ENCODE measurements at regions of chr1 and their contacts with region 1.

Region 1: DNA sequence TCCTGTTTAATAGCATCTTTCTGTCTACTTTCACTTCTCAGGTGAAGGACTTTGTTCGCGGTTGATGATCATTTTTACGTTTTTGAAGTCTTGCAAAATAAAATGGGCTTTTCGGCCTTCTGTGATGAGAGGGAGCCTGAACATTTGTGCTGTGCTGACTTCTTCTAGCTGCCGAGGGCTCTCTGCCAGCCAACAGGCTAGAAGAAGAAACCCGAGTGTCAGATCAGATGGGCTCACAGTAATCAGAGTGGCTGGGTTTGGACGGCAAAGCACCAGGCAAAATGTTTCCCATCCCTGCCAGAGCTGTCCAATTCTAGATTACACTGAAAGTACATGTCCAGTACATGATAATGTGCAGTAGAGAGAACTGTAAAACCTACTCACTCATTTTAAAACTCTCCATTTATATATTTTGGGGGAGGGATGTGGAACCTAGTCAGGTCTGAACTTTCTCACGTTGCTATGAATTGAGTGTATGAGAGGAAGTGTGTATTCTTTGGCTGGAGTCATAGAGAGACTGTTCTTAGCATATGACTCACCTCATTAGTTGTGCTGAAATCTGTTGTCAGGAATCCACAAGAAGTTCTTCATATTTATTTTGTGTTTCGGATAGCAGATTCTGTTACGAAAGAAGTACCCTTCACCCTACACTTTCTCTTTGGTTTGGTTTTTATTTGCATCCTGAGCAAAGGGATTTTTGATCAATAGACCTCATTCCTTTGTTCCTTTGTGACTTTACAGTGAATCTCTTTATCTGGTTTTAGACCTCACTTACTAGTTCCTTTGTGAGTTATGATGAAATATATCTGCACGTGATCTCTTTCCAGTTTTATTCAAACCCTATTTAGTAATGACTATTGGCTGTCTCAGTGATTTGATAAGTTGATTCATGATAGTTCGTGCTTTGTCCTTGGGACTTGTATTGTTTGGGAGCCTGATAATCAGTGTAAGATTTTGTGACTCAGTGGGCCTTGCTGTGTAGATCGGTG is 4.8 kb downstream of the ATP1A1 start:
- DNase-seq: peak; percentile 93
- H3K4me3 Mint-ChIP-seq: peak overlapping the region; percentile 94
- H3K27ac Mint-ChIP-seq: peak overlapping the region; percentile 78
- H3K4me1 Mint-ChIP-seq: peaks cover 55% of the 10 kb centered on the region
- H3K27me3 Mint-ChIP-seq: no peaks in the 10 kb centered on the region
- CTCF ChIP-seq: no peak

Region 2: DNA sequence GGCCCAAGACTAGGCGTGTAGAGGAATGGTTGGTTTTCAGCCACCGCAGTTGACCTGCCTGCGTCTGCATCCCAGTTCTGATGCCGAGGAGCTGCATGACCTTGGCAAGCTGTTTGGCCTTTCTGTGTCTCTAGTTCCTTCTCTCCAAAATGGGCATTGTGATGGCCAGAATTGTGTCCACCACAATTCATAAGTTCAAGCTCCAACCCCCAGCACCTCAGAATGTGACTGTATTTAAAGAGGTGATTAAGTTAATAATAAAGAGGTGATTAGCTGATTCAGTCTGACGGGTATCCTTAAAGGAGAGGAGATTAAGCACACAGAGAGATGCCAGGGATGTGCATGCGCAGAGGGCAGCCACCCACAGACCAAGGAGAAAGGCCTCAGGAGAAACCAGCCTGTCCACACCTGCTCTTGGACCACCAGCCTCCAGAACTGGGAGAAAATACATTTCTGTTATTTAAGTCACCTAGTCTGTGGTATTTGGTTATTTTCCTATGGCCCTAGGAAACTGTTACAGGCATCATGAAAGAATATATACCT is 238.2 kb before region 1 on chr1:
- CTCF ChIA-PET with region 1: interaction called, 16 read pairs
- POLR2A ChIA-PET with region 1: interaction called, 12 read pairs
- intact Hi-C with region 1: no loop called
- DNase-seq: no peak
- H3K4me3 Mint-ChIP-seq: no peak overlapping the region
- H3K27ac Mint-ChIP-seq: no peak overlapping the region
- H3K4me1 Mint-ChIP-seq: no peaks in the 10 kb centered on the region
- H3K27me3 Mint-ChIP-seq: no peaks in the 10 kb centered on the region
- CTCF ChIP-seq: no peak

Region 3: GRCh38 chr1:116218990-116219321 is 158.9 kb before region 1 on chr1:
- CTCF ChIA-PET with region 1: no interaction called
- POLR2A ChIA-PET with region 1: no interaction called
- intact Hi-C with region 1: no loop called
- DNase-seq: peak; percentile 13
- H3K4me3 Mint-ChIP-seq: no peak overlapping the region
- H3K27ac Mint-ChIP-seq: no peak overlapping the region
- H3K4me1 Mint-ChIP-seq: no peaks in the 10 kb centered on the region
- H3K27me3 Mint-ChIP-seq: no peaks in the 10 kb centered on the region
- CTCF ChIP-seq: no peak

Region 4: GRCh38 chr1:116268204-116268603 is 109.6 kb before region 1 on chr1:
- CTCF ChIA-PET with region 1: interaction called, 3 read pairs
- POLR2A ChIA-PET with region 1: interaction called, 44 read pairs
- intact Hi-C with region 1: no loop called
- DNase-seq: peak; percentile 98
- H3K4me3 Mint-ChIP-seq: no peak overlapping the region
- H3K27ac Mint-ChIP-seq: peak overlapping the region; percentile 47
- H3K4me1 Mint-ChIP-seq: peaks cover 18% of the 10 kb centered on the region
- H3K27me3 Mint-ChIP-seq: no peaks in the 10 kb centered on the region
- CTCF ChIP-seq: no peak

Region 5: GRCh38 chr1:116297495-116298212 is 80.2 kb before region 1 on chr1:
- CTCF ChIA-PET with region 1: no interaction called
- POLR2A ChIA-PET with region 1: no interaction called
- intact Hi-C with region 1: no loop called
- DNase-seq: no peak
- H3K4me3 Mint-ChIP-seq: no peak overlapping the region
- H3K27ac Mint-ChIP-seq: no peak overlapping the region
- H3K4me1 Mint-ChIP-seq: peaks cover 19% of the 10 kb centered on the region
- H3K27me3 Mint-ChIP-seq: no peaks in the 10 kb centered on the region
- CTCF ChIP-seq: no peak

Region 6: GRCh38 chr1:116311756-116312691 is 65.8 kb before region 1 on chr1:
- CTCF ChIA-PET with region 1: no interaction called
- POLR2A ChIA-PET with region 1: interaction called, 15 read pairs
- intact Hi-C with region 1: no loop called
- DNase-seq: no peak
- H3K4me3 Mint-ChIP-seq: no peak overlapping the region
- H3K27ac Mint-ChIP-seq: no peak overlapping the region
- H3K4me1 Mint-ChIP-seq: peaks cover 11% of the 10 kb centered on the region
- H3K27me3 Mint-ChIP-seq: no peaks in the 10 kb centered on the region
- CTCF ChIP-seq: no peak

Region 7: DNA sequence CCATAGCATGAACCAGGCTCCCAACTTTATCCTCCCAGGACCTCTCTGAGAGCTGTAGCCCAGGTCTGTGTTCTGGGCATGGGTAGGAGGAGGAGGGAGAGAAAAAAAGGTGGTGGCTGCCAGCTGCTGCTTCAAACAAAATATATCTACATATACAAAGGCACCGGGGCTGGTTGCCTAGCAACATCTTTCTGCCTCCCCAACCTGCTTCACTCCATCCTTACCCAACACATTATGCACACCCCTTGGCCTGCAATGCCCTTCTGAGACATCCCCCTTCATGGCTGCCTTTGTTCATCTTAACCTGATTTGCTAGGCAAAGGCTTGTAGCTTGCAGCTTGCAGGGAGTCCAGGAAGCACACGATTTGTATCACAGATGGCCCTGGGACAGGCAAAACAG is 32.0 kb before region 1 on chr1:
- CTCF ChIA-PET with region 1: interaction called, 7 read pairs
- POLR2A ChIA-PET with region 1: interaction called, 110 read pairs
- intact Hi-C with region 1: loop called (anchors 2 kb)
- DNase-seq: no peak
- H3K4me3 Mint-ChIP-seq: no peak overlapping the region
- H3K27ac Mint-ChIP-seq: no peak overlapping the region
- H3K4me1 Mint-ChIP-seq: peaks cover 18% of the 10 kb centered on the region
- H3K27me3 Mint-ChIP-seq: no peaks in the 10 kb centered on the region
- CTCF ChIP-seq: no peak

Region 8: GRCh38 chr1:116397728-116398127 is 19.9 kb after region 1 on chr1:
- CTCF ChIA-PET with region 1: interaction called, 3 read pairs
- POLR2A ChIA-PET with region 1: interaction called, 30 read pairs
- intact Hi-C with region 1: no loop called
- DNase-seq: no peak
- H3K4me3 Mint-ChIP-seq: no peak overlapping the region
- H3K27ac Mint-ChIP-seq: no peak overlapping the region
- H3K4me1 Mint-ChIP-seq: peaks cover 11% of the 10 kb centered on the region
- H3K27me3 Mint-ChIP-seq: no peaks in the 10 kb centered on the region
- CTCF ChIP-seq: no peak

Region 9: DNA sequence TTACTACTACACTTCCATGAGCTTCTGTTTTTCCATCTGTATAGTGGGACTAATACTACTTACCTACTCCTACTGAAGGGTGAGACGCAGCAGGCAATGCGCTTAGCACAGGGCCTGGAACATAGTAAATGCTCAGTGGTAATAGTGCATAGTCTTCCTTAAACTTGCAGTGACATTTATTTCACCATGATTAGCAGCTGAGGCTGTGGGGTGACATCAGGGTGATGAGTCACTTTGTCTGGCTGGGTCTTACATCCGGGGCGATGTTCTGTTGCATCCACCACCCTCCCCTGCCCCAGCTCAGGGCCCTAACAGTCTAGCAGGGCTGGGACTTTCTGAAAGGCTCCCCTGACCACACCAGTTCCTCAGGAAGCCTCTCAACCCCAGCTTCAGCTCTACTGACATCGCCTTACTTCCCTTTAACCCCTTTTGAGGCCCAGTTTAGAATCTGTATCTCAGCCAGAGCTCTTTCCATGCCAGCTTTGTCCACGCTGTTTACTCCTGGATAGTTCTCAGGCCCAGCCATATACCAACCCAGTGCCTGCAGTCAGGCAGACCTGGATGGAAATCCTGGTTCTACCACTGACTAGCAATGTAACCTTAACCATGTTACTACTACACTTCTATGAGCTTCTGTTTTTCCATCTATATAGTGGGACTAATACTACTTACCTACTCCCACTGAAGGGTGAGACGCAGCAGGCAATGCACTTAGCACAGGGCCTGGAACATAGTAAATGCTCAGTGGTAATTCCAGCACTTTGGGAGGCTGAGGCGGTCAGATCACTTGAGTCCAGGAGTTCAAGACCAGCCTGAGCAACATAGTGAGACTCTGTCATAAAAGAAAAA is 126.7 kb after region 1 on chr1:
- CTCF ChIA-PET with region 1: interaction called, 4 read pairs
- POLR2A ChIA-PET with region 1: interaction called, 13 read pairs
- intact Hi-C with region 1: no loop called
- DNase-seq: peak; percentile 62
- H3K4me3 Mint-ChIP-seq: no peak overlapping the region
- H3K27ac Mint-ChIP-seq: peak overlapping the region; percentile 73
- H3K4me1 Mint-ChIP-seq: peaks cover 27% of the 10 kb centered on the region
- H3K27me3 Mint-ChIP-seq: no peaks in the 10 kb centered on the region
- CTCF ChIP-seq: no peak